ENCODE measurements at regions of chr5 and their contacts with region 1.

Region 1: DNA sequence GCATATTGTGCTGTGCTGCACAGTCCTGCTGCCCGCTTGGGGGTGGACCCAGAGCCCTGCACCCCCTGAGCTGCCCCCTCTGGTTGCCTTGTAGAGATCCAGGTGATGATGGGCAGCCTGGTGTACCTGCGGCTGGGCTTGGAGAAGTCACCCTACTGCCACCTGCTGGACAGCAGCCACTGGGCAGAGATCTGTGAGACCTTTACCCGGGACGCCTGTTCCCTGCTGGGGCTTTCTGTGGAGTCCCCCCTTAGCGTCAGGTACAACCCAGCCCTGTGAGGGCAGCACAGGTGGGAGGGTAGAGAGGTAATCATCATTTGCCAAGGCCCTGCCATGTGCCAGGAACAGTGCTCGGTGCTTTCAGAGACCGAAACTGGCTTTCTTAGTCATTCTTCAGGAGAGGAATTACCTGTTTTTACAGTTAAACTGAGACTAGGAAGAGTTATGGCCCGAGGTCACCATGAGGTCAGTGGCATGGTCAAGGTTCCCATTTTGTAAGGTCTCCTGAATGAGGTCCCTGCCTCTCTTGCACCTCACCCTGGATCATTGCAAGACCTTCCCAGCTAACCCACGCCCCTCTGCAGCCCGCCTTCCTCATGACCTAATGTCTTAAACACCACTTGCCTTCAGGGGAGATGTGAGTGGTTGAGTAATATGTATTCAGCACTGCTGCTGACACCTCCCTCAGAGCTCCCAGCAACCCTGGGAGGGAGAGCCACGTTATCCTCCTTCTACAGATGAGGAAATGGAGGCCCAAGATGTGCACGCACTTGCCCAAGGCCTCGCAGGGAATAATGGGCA is 7.5 kb downstream of the NHP2 start:
- DNase-seq: peak; percentile 71 to 89
- H3K4me3 ChIP-seq: no peak overlapping the region
- H3K27ac ChIP-seq: no peak overlapping the region
- H3K4me1 ChIP-seq: peaks cover 0 to 2% (median 0%) of the 10 kb centered on the region in 4 experiments; a peak in 3 of 7 replicates
- H3K27me3 ChIP-seq: no peaks in the 10 kb centered on the region
- CTCF ChIP-seq: peak in 2 of 3 experiments; percentile 96 to 97; a peak in 3 of 4 replicates
- EP300 ChIP-seq: no peak
- POLR2A ChIP-seq: no peak; a peak in 1 of 3 replicates
- RAD21 ChIP-seq: peak; percentile 83 to 86

Region 2: DNA sequence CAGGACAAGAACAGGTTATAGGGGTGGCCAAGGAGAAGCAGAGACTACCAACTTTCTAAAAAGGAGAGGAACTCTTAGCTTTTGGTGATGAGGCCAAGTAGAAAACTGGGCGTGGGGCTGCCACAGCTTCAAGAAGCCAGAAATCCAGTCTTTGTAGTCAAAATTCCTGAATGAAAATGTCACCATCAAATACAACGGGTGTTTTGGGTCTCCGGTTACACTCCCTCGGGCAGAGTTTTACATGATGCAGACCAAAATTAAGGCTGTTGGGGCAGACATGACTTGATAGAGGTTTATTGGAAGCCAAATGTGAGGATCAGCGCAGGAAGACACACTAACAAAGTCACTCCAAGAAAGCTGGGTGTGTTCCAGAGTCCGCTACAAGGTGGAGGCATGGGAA is 62.3 kb before region 1 on chr5:
- CTCF ChIA-PET with region 1: interaction called, 515 read pairs
- POLR2A ChIA-PET with region 1: interaction called, 50 read pairs
- DNase-seq: no peak
- H3K4me3 ChIP-seq: no peak overlapping the region
- H3K27ac ChIP-seq: no peak overlapping the region
- H3K4me1 ChIP-seq: peaks cover 0 to 5% (median 3%) of the 10 kb centered on the region in 4 experiments; a peak in 1 of 7 replicates
- H3K27me3 ChIP-seq: no peaks in the 10 kb centered on the region
- CTCF ChIP-seq: no peak
- EP300 ChIP-seq: no peak
- POLR2A ChIP-seq: no peak
- RAD21 ChIP-seq: no peak

Region 3: DNA sequence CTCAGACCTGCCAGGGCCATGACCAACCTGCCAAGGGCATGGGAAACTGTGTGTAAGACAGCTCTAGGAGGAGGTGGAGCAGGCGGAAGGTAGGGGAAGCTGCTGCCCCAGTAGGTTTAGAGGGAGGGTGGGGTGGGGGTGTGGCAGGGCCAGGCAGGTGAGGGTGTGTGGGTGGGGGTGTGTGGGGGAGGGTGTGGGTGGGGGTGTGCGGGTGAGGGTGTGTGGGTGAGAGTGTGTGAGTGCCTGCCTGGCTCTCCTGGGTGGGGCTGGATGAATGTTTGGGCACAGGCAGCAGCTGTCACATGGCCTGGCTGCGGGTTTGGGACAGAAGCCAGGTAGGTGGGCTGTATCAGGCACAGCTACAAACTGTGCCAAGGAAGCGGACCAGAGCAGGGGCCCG is 41.7 kb before region 1 on chr5:
- CTCF ChIA-PET with region 1: interaction called, 10 read pairs
- POLR2A ChIA-PET with region 1: interaction called, 1,250 read pairs
- DNase-seq: no peak
- H3K4me3 ChIP-seq: no peak overlapping the region
- H3K27ac ChIP-seq: no peak overlapping the region
- H3K4me1 ChIP-seq: 0 out of 7 replicates have a peak, but pooled peaks cover 0 to 7% (median 1%) of the 10 kb centered on the region in 4 experiments
- H3K27me3 ChIP-seq: no peaks in the 10 kb centered on the region
- CTCF ChIP-seq: no peak
- EP300 ChIP-seq: no peak
- POLR2A ChIP-seq: no peak
- RAD21 ChIP-seq: no peak

Region 4: GRCh38 chr5:178113199-178113787 is 32.9 kb before region 1 on chr5 and contains the start of gene N4BP3:
- CTCF ChIA-PET with region 1: interaction called, 17 read pairs
- POLR2A ChIA-PET with region 1: interaction called, 1,250 read pairs
- DNase-seq: peak; percentile 44 to 88
- H3K4me3 ChIP-seq: peak within 1 kb of the TSS; percentile 54 to 98 (median 82)
- H3K27ac ChIP-seq: peak within 1 kb of the TSS; percentile 78; the same call in 1 of the 2 replicates
- H3K4me1 ChIP-seq: peaks cover 3 to 43% (median 31%) of the 10 kb centered on the region in 4 experiments
- H3K27me3 ChIP-seq: no peaks in the 10 kb centered on the region
- CTCF ChIP-seq: peak in 1 of 3 experiments; percentile 7; a peak in 1 of 4 replicates
- EP300 ChIP-seq: peak in 1 of 2 experiments; percentile 77; a peak in 1 of 3 replicates
- POLR2A ChIP-seq: peak in 1 of 2 experiments; percentile 67; a peak in 2 of 3 replicates
- RAD21 ChIP-seq: no peak; a peak in 1 of 4 replicates
- total RNA-seq, gene N4BP3: 36.0 and 39.2 TPM in 2 replicates

Region 5: GRCh38 chr5:178130604-178131485 is 15.4 kb before region 1 on chr5 and contains the start of gene RMND5B:
- CTCF ChIA-PET with region 1: interaction called, 149 read pairs
- POLR2A ChIA-PET with region 1: interaction called, 1,250 read pairs
- DNase-seq: peak in 1 of 2 experiments; percentile 87
- H3K4me3 ChIP-seq: peak within 1 kb of the TSS; percentile 72 to 95 (median 78)
- H3K27ac ChIP-seq: peak within 1 kb of the TSS; percentile 86
- H3K4me1 ChIP-seq: peaks cover 4 to 17% (median 13%) of the 10 kb centered on the region in 4 experiments
- H3K27me3 ChIP-seq: no peaks in the 10 kb centered on the region
- CTCF ChIP-seq: peak in 1 of 3 experiments; percentile 11; a peak in 1 of 4 replicates
- EP300 ChIP-seq: peak in 1 of 2 experiments; percentile 95; a peak in 2 of 3 replicates
- POLR2A ChIP-seq: peak in 1 of 2 experiments; percentile 79; a peak in 2 of 3 replicates
- RAD21 ChIP-seq: no peak; a peak in 1 of 4 replicates
- total RNA-seq, gene RMND5B: 74.6 and 75.9 TPM in 2 replicates

Region 6: GRCh38 chr5:178163772-178164735 is 17.8 kb after region 1 on chr5:
- CTCF ChIA-PET with region 1: interaction called, 17 read pairs
- POLR2A ChIA-PET with region 1: interaction called, 6 read pairs
- DNase-seq: peak in 1 of 2 experiments; percentile 100
- H3K4me3 ChIP-seq: peak overlapping the region in 3 of 4 experiments; percentile 37 to 49 (median 48); a peak in 6 of 8 replicates
- H3K27ac ChIP-seq: no peak overlapping the region
- H3K4me1 ChIP-seq: peaks cover 0 to 6% (median 3%) of the 10 kb centered on the region in 4 experiments; a peak in 3 of 7 replicates
- H3K27me3 ChIP-seq: peaks cover 0 to 4% (median 2%) of the 10 kb centered on the region in 4 experiments; a peak in 1 of 7 replicates
- CTCF ChIP-seq: peak; percentile 94 to 100 (median 100)
- EP300 ChIP-seq: no peak
- POLR2A ChIP-seq: 0 out of 3 replicates have a peak, but pooled peaks of 1 of the 2 experiments have one; percentile 22
- RAD21 ChIP-seq: peak; percentile 96 to 98

Region 7: GRCh38 chr5:178249191-178249989 is 103.2 kb after region 1 on chr5:
- CTCF ChIA-PET with region 1: no interaction called
- POLR2A ChIA-PET with region 1: no interaction called
- DNase-seq: no peak
- H3K4me3 ChIP-seq: no peak overlapping the region
- H3K27ac ChIP-seq: no peak overlapping the region
- H3K4me1 ChIP-seq: peaks cover 0 to 3% (median under 1%) of the 10 kb centered on the region in 4 experiments; a peak in 4 of 7 replicates
- H3K27me3 ChIP-seq: no peaks in the 10 kb centered on the region; a peak in 1 of 7 replicates
- CTCF ChIP-seq: no peak
- EP300 ChIP-seq: no peak
- POLR2A ChIP-seq: no peak
- RAD21 ChIP-seq: no peak

Region 8: DNA sequence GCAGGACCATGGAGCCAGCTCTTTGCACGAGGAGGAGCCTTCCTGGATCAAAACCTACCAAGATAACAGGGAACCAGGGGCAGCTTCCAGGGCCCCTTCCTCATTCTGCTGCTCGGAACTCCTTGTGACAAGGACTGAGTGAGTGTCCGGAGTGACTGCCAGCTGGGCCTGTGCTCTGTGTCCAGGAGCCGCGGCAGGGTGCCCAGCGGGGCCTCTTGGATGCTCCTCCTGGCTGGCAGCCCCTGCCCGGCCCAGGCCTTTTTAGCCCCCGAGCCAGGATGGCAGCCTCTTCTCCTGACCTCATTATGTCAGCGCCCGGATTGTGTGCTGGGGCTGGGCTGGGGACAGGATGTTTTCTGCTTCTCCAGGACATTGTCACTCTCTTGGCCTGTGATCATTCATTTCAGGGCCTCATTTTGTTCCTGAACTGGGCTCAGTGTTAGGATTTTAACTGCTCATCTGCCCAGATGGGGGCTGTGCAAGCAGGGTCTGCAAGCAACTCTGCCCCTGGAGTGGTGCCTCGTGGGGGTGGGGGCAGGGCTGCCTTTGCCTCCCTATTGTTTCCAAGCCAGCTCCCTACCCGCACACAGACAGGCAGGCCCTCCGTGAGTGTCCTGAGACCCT is 282.2 kb after region 1 on chr5:
- CTCF ChIA-PET with region 1: no interaction called
- POLR2A ChIA-PET with region 1: no interaction called
- DNase-seq: peak in 1 of 2 experiments; percentile 54
- H3K4me3 ChIP-seq: no peak overlapping the region
- H3K27ac ChIP-seq: no peak overlapping the region
- H3K4me1 ChIP-seq: peaks cover 4 to 10% (median 6%) of the 10 kb centered on the region in 4 experiments
- H3K27me3 ChIP-seq: no peaks in the 10 kb centered on the region
- CTCF ChIP-seq: no peak
- EP300 ChIP-seq: no peak
- POLR2A ChIP-seq: no peak
- RAD21 ChIP-seq: no peak

Measured in H1 (cell line).